ENCODE measurements at regions of chr1 and their contacts with region 1.

Region 1: GRCh38 chr1:22704440-22705067 is 6.1 kb upstream of the EPHB2 start:
- DNase-seq: peak; percentile 14 to 68 (median 45)
- ATAC-seq: peak; percentile 92
- H3K4me3 ChIP-seq: no peak overlapping the region
- H3K4me3 Mint-ChIP-seq: no peak overlapping the region
- H3K27ac ChIP-seq: no peak overlapping the region
- H3K27ac Mint-ChIP-seq: no peak overlapping the region
- H3K4me1 ChIP-seq: no peaks in the 10 kb centered on the region
- H3K4me1 Mint-ChIP-seq: peaks cover 0 to 5% (median under 1%) of the 10 kb centered on the region in 7 donors
- H3K27me3 ChIP-seq: peaks cover 0 to 4% of the 10 kb centered on the region in 2 donors
- H3K27me3 Mint-ChIP-seq: peaks cover 18 to 32% (median 26%) of the 10 kb centered on the region in 5 donors

Region 2: DNA sequence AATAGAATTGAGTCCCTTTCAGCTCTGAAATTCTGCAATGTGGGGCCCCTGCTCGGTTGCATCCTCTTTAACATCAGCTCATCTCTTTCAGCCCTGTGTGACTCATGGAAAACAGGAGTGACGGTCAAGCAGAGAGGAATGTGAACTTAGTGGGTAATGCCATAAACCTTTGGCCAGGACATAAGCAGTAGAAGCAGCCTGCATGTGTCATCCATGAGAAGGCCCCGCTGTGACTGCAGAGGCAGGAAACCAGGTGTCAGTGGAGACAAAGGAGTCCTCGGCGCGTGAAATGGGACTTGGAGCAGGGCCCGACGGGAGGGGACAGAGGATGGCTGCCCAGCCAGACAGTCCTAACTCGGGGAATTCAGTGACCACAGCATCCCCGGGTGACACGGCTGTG is 15.0 kb before region 1 on chr1:
- CTCF ChIA-PET with region 1: no interaction called
- POLR2A ChIA-PET with region 1: no interaction called
- intact Hi-C with region 1: no loop called
- DNase-seq: no peak
- ATAC-seq: no peak
- H3K4me3 ChIP-seq: no peak overlapping the region
- H3K4me3 Mint-ChIP-seq: no peak overlapping the region
- H3K27ac ChIP-seq: no peak overlapping the region
- H3K27ac Mint-ChIP-seq: no peak overlapping the region
- H3K4me1 ChIP-seq: no peaks in the 10 kb centered on the region
- H3K4me1 Mint-ChIP-seq: no peaks in the 10 kb centered on the region
- H3K27me3 ChIP-seq: no peaks in the 10 kb centered on the region
- H3K27me3 Mint-ChIP-seq: peaks cover 6 to 37% (median 11%) of the 10 kb centered on the region in 5 donors

Region 3: DNA sequence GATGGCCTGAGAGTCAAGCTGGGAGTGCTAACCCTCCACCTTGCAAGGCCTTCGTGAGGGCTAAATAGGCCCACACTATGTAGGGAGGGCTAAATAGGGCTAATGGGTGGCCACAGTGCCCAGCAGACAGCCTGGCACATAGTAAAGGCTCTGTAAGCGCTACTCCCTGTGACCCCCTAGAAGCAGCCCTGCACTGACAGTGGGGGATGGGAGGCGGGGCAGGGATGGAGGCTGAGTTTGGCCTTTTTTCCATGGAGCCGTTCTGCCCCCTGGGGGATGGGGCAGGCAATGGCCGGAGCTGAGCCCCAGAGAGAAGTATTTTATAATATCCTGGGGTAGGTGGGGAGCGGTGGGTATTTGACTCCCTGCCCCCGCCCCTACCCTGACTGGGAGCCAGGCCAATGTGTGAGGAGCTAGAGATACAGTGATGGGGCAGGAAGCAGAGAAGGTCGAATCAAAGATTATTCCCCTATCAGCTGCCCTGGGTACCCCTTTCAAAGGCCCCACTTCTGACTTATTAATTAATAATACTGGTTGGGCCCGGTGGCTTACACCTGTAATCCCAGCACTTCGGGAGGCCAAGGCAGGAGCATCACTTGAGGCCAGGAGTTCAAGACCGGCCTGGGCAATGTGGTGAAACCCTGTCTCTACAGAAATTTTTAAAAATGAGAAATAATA is 225.8 kb after region 1 on chr1:
- CTCF ChIA-PET with region 1: no interaction called
- POLR2A ChIA-PET with region 1: no interaction called
- intact Hi-C with region 1: loop called in 1 of 2 experiments (anchors 5 kb)
- DNase-seq: no peak
- ATAC-seq: peak; percentile 24
- H3K4me3 ChIP-seq: no peak overlapping the region
- H3K4me3 Mint-ChIP-seq: no peak overlapping the region
- H3K27ac ChIP-seq: no peak overlapping the region
- H3K27ac Mint-ChIP-seq: no peak overlapping the region
- H3K4me1 ChIP-seq: no peaks in the 10 kb centered on the region
- H3K4me1 Mint-ChIP-seq: no peaks in the 10 kb centered on the region
- H3K27me3 ChIP-seq: no peaks in the 10 kb centered on the region
- H3K27me3 Mint-ChIP-seq: peaks cover 4 to 25% (median 22%) of the 10 kb centered on the region in 5 donors

Region 4: GRCh38 chr1:22969304-22969709 is 264.8 kb after region 1 on chr1:
- CTCF ChIA-PET with region 1: no interaction called
- POLR2A ChIA-PET with region 1: no interaction called
- intact Hi-C with region 1: loop called in 1 of 2 experiments (anchors 10 kb)
- DNase-seq: no peak
- ATAC-seq: no peak
- H3K4me3 ChIP-seq: no peak overlapping the region
- H3K4me3 Mint-ChIP-seq: no peak overlapping the region
- H3K27ac ChIP-seq: no peak overlapping the region
- H3K27ac Mint-ChIP-seq: no peak overlapping the region
- H3K4me1 ChIP-seq: no peaks in the 10 kb centered on the region
- H3K4me1 Mint-ChIP-seq: no peaks in the 10 kb centered on the region
- H3K27me3 ChIP-seq: no peaks in the 10 kb centered on the region
- H3K27me3 Mint-ChIP-seq: peaks cover 50 to 58% (median 55%) of the 10 kb centered on the region in 5 donors

Measured in naive thymus-derived CD4-positive, alpha-beta T cell (primary cell).